ENCODE measurements at regions of chr15 and their contacts with region 1.

Region 1: GRCh38 chr15:50145451-50145872 is 26.4 kb upstream of the ATP8B4 start:
- DNase-seq: peak in 3 of 14 experiments; percentile 56 to 68 (median 65)
- ATAC-seq: no peak
- H3K4me3 ChIP-seq: no peak overlapping the region
- H3K4me3 Mint-ChIP-seq: no peak overlapping the region
- H3K27ac ChIP-seq: no peak overlapping the region
- H3K27ac Mint-ChIP-seq: no peak overlapping the region
- H3K4me1 ChIP-seq: no peaks in the 10 kb centered on the region
- H3K4me1 Mint-ChIP-seq: no peaks in the 10 kb centered on the region
- H3K27me3 ChIP-seq: peaks cover 0 to 5% of the 10 kb centered on the region in 2 experiments
- H3K27me3 Mint-ChIP-seq: no peaks in the 10 kb centered on the region
- CTCF ChIP-seq: peak; percentile 83

Region 2: DNA sequence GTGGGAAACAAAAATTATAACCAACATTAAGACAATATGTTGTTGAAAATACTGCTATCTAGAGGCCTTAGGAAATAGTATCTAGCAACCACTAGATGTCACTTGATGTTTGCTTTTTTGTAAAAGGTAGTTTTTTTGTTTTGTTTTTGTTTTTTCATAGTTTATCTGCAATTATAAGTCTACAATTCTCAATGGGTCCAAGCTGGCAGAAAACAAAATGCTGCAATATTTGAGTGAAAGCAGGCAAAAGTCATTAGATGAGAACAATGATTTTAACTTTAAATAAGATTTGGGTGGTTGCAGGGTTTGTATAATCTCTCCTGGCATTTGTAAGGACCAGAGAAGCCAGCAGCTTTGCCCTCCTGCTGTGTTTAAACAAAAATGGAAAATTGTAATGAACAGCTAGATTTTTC is 1787.2 kb before region 1 on chr15:
- CTCF ChIA-PET with region 1: no interaction called
- POLR2A ChIA-PET with region 1: no interaction called
- intact Hi-C with region 1: loop called in 1 of 2 experiments (anchors 5 kb)
- DNase-seq: peak in 2 of 14 experiments; percentile 4
- ATAC-seq: no peak
- H3K4me3 ChIP-seq: no peak overlapping the region
- H3K4me3 Mint-ChIP-seq: no peak overlapping the region
- H3K27ac ChIP-seq: no peak overlapping the region
- H3K27ac Mint-ChIP-seq: no peak overlapping the region
- H3K4me1 ChIP-seq: no peaks in the 10 kb centered on the region
- H3K4me1 Mint-ChIP-seq: peaks cover 10% of the 10 kb centered on the region
- H3K27me3 ChIP-seq: no peaks in the 10 kb centered on the region
- H3K27me3 Mint-ChIP-seq: peaks cover under 1% of the 10 kb centered on the region
- CTCF ChIP-seq: peak; percentile 44

Region 3: GRCh38 chr15:49145651-49146609 is 999.5 kb before region 1 on chr15:
- CTCF ChIA-PET with region 1: no interaction called
- POLR2A ChIA-PET with region 1: no interaction called
- intact Hi-C with region 1: loop called in 1 of 2 experiments (anchors 10 kb)
- DNase-seq: peak in 7 of 14 experiments; percentile 1 to 66 (median 46)
- ATAC-seq: peak; percentile 43
- H3K4me3 ChIP-seq: no peak overlapping the region
- H3K4me3 Mint-ChIP-seq: no peak overlapping the region
- H3K27ac ChIP-seq: no peak overlapping the region
- H3K27ac Mint-ChIP-seq: no peak overlapping the region
- H3K4me1 ChIP-seq: no peaks in the 10 kb centered on the region
- H3K4me1 Mint-ChIP-seq: peaks cover 64% of the 10 kb centered on the region
- H3K27me3 ChIP-seq: no peaks in the 10 kb centered on the region
- H3K27me3 Mint-ChIP-seq: no peaks in the 10 kb centered on the region
- CTCF ChIP-seq: peak; percentile 66

Region 4: DNA sequence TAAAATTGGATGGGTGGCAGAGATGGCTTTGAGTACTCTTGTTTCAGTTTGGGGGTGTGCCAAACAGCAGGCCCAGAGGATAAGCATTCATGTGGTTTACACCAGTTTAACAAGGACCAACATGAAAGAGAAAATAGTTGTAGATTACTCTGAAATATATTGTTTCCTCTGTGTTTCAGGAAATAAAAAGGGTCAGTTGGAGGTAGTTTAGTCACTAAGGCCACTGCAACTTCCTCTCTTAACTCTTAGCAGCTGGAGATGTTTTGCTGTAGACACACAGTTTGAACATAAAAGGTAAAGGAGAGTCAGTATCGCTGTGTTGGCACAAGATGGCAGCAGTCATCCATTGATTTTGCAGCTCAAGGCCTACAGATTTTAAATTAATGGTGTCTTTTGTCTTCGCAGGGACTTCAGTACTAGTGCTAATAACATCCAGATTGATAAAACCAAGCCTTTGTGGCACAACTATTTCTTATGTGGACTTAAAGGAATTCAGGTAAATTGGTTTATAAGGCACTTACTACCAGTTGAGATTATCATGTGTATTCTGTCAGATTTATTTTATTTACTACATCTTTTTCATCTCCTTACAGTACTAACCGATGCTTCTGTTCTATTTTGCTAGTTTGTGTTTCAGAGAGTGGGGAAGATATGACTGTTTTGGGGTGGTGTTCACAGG is 909.9 kb before region 1 on chr15:
- CTCF ChIA-PET with region 1: interaction called, 4 read pairs
- POLR2A ChIA-PET with region 1: no interaction called
- intact Hi-C with region 1: loop called (anchors 2 kb)
- DNase-seq: peak; percentile 7 to 70 (median 25)
- ATAC-seq: peak; percentile 59
- H3K4me3 ChIP-seq: no peak overlapping the region
- H3K4me3 Mint-ChIP-seq: no peak overlapping the region
- H3K27ac ChIP-seq: no peak overlapping the region
- H3K27ac Mint-ChIP-seq: peak overlapping the region; percentile 3
- H3K4me1 ChIP-seq: no peaks in the 10 kb centered on the region
- H3K4me1 Mint-ChIP-seq: peaks cover 14% of the 10 kb centered on the region
- H3K27me3 ChIP-seq: no peaks in the 10 kb centered on the region
- H3K27me3 Mint-ChIP-seq: no peaks in the 10 kb centered on the region
- CTCF ChIP-seq: peak; percentile 52

Measured in CD4-positive, alpha-beta T cell (primary cell).